Sigmoid colon (tissue), 7 donors: ENCODE measurements at regions of chr15 and their contacts with region 1.

Region 1: DNA sequence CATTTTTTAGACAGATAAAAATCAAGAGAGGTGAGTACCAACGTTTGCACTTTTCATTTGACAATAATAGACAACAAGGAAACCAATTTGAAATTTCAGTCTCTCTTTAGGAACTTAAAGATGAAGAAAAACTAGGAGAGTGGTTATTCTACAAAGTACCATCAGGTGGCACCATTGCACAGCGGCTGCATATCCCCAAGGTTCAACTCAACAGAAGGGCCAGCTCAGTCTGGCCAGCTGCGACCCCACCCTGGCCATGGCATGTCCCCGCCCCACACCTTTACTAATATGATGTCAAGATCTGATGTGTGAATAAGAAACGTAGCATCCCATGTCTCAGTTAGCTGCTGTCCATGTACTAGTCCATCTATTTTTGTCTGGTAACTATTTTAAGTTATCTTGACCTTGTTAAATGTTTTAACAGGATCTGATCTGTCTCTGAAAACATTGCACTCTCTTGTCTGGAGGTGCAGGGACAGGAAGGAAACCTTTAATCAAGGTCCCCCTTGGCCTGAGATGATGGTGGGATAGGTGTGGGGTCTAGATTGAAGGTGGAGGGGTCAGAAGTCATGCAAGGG is 35.5 kb upstream of the CGNL1 start:
- DNase-seq: no peak
- H3K4me3 ChIP-seq: no peak overlapping the region
- H3K27ac ChIP-seq: no peak overlapping the region
- H3K4me1 ChIP-seq: no peaks in the 10 kb centered on the region
- H3K27me3 ChIP-seq: no peaks in the 10 kb centered on the region
- CTCF ChIP-seq: peak; percentile 60 to 94 (median 79)
- EP300 ChIP-seq: no peak
- POLR2A ChIP-seq: no peak

Region 2: DNA sequence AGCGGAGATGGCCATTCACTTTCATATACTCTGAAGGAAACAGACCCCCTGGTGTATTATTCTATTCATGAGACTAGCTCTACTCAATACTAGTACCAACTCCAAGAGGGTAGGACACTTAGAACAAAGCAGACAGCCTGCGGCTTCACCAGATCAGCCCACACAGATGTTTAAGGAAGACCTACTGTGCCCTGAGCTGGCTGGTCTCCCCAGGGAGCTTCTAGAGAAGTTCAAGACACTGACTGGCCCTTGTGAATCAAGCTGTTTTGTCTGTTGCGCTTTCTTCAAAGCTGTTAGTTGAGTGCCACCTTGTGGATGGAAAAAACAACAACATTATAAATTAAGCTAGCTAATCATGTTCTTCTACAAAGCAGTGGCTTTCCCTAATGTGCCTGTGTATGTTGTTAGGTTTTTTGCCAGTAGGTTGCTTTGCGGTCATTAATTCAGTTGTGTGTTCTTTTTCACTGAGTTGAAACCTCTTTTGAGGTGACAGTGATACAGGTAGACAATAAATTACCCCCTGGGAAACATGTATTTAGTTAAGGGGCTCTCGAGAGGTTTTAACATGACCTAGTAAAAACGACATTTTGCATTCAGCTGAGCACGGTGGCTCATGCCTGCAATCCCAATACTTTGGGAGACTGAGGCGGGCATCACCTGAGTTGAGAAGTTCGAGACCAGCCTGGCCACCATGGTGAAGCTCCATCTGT is 186.8 kb after region 1 on chr15:
- intact Hi-C with region 1: loop called (anchors 1 kb)
- DNase-seq: peak; percentile 71
- H3K4me3 ChIP-seq: no peak overlapping the region
- H3K27ac ChIP-seq: no peak overlapping the region
- H3K4me1 ChIP-seq: peaks cover 0 to 16% (median 9%) of the 10 kb centered on the region in 4 donors
- H3K27me3 ChIP-seq: no peaks in the 10 kb centered on the region
- CTCF ChIP-seq: peak in 3 of 4 experiments; percentile 52 to 76 (median 66)
- EP300 ChIP-seq: no peak
- POLR2A ChIP-seq: no peak